ENCODE measurements at regions of chrX and their contacts with region 1.

Region 1: GRCh38 chrX:34509394-34509793 is 147.7 kb downstream of the TMEM47 start:
- DNase-seq: no peak
- H3K4me3 ChIP-seq: no peak overlapping the region
- H3K27ac ChIP-seq: no peak overlapping the region
- H3K4me1 ChIP-seq: no peaks in the 10 kb centered on the region
- H3K27me3 ChIP-seq: no peaks in the 10 kb centered on the region
- CTCF ChIP-seq: no peak
- POLR2A ChIP-seq: no peak

Region 2: DNA sequence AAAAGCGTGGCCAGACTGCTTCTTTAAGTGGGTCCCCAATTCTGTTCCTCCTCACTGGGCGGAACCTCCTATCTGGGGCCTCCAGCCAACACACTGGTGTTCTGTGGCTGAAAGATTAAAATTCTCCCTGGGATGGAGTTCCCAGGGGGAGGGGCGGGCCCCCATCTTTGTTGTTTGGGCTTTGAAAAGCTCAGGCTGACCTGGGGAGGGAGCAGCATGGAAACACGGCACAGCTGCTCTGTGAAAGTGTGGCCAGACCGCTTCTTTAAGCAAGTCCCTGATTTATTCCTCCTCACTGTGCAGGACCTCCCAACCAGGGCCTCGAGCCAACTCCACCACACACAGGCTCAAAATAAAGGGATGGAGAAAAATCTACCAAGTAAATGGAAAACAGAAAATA is 71.8 kb before region 1 on chrX:
- CTCF ChIA-PET with region 1: no interaction called
- POLR2A ChIA-PET with region 1: no interaction called
- dilution Hi-C with region 1: no loop called
- intact Hi-C with region 1: loop called (anchors 2 kb)
- DNase-seq: no peak
- H3K4me3 ChIP-seq: no peak overlapping the region
- H3K27ac ChIP-seq: no peak overlapping the region
- H3K4me1 ChIP-seq: no peaks in the 10 kb centered on the region
- H3K27me3 ChIP-seq: no peaks in the 10 kb centered on the region
- CTCF ChIP-seq: no peak
- POLR2A ChIP-seq: no peak